ENCODE measurements at regions of chr6 and their contacts with region 1.

Region 1: DNA sequence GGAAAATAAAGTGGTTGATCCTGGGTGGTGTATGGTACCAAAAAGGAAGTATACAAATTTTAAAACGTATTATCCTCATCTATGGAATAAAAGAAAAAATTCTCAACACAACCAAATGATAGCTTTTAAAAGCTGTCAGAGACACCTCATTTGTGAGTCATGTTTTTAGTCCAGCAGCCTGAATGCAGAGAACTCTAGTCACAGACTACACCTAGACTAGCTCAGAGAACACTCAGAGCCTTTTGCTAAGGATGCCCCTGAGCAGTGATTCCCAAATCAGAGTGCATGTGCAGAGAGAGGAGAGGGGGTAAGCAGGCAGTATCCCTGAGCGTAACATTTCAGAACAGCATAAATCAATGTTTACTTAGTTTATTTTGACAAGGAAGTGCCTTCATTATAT is 809.3 kb downstream of the HACE1 start:
- DNase-seq: no peak
- ATAC-seq: no peak
- H3K4me3 ChIP-seq: no peak overlapping the region
- H3K27ac ChIP-seq: no peak overlapping the region
- H3K4me1 ChIP-seq: no peaks in the 10 kb centered on the region
- H3K27me3 ChIP-seq: peaks cover 0 to 4% (median 0%) of the 10 kb centered on the region in 7 donors
- CTCF ChIP-seq: no peak

Region 2: DNA sequence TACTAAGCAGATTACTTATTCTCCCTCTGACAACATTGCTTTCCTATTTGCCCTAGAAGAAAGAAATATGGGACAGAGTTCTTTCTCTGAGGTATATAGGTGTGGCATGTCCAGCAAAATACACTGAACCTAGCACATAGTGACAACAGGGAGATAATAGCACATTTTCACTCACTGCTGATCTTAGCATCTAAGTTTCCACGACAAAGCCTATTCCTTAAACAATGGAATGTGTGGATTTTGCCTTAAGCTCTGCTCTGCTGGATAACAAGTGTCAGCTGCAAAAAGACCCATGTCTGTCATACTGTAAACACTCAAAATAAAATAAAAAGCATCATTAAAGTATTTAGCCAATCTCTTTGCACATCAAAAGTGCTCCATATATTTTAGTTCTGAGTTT is 490.9 kb before region 1 on chr6:
- intact Hi-C with region 1: no loop called
- DNase-seq: no peak
- ATAC-seq: no peak
- H3K4me3 ChIP-seq: no peak overlapping the region
- H3K27ac ChIP-seq: no peak overlapping the region
- H3K4me1 ChIP-seq: no peaks in the 10 kb centered on the region
- H3K27me3 ChIP-seq: no peaks in the 10 kb centered on the region
- CTCF ChIP-seq: no peak

Region 3: DNA sequence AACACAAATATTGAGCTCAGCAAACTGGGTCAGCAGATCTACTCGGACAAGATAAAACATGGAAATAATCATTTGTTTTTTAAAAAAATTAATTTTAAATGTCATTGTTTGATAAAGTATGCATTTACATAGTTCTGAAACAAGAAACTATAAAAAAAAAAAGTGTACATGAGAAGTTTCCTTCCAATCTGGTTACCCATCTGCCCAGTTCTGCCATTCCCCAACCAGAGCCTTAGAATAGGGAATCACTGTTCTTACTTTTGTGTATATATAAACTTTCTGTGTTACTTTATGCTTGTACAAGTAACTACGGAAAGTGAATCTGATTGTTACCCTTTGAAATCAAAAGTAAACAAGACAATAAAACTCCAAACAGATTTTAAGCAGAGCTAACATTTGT is 17.8 kb after region 1 on chr6:
- intact Hi-C with region 1: loop called in 1 of 10 experiments (anchors 1 kb)
- DNase-seq: no peak
- ATAC-seq: no peak
- H3K4me3 ChIP-seq: no peak overlapping the region
- H3K27ac ChIP-seq: no peak overlapping the region
- H3K4me1 ChIP-seq: no peaks in the 10 kb centered on the region
- H3K27me3 ChIP-seq: no peaks in the 10 kb centered on the region
- CTCF ChIP-seq: no peak

Measured in heart right ventricle (tissue), 16 donors.